Heart right ventricle (tissue), 16 donors: ENCODE measurements at regions of chr10 and their contacts with region 1.

Region 1: GRCh38 chr10:102394079-102394800 is 1.3 kb upstream of the NFKB2 start:
- DNase-seq: peak; percentile 95 to 97
- ATAC-seq: peak; percentile 91 to 94 (median 92)
- H3K4me3 ChIP-seq: peak overlapping the region; percentile 48 to 90 (median 69)
- H3K27ac ChIP-seq: peak overlapping the region; percentile 91 to 98 (median 96)
- H3K4me1 ChIP-seq: peaks cover 4 to 48% (median 25%) of the 10 kb centered on the region in 9 donors
- H3K27me3 ChIP-seq: no peaks in the 10 kb centered on the region
- CTCF ChIP-seq: peak in 6 of 9 donors; percentile 46 to 99 (median 98)

Region 2: DNA sequence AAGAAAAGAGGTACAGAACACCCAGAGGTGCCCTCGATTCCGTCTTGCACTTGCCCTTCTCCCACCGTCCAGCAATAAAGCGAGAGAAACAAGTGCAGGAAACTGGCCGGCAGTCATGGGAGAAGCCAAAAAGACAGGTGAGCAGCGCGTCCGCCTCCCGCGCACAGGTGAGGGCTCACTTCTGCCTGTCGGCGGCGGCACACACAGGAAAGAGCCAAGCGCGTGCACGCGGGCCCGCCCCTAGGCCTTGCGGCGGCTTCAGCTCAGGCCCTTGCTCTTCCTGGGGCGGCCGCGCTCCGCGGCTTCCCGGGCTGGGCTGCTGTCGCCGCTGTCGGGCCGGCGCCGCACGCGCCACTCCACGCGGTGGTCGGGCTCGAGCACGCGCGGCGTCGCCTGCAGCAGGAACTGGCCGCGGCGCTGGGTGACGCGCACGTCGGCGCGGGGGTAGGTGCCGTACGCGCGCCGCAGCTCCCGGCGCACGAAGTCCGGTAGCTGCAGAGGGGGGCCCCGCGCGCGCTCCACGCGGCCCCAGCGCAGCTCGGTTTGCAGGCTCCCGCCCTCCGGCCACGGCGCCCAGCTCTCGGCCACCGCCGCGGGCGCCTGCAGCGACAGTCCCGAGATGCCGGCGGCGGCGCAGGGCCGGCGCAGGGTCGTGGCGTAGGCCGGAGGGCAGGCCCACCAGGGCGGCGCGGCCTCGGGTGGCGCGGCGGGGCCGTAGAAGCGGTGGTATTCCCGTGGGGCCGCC is 56.1 kb after region 1 on chr10:
- intact Hi-C with region 1: loop called in 1 of 10 experiments (anchors 10 kb)
- DNase-seq: peak; percentile 78 to 87
- ATAC-seq: peak; percentile 86 to 96 (median 92)
- H3K4me3 ChIP-seq: peak overlapping the region; percentile 74 to 88 (median 82)
- H3K27ac ChIP-seq: peak overlapping the region in 9 of 10 donors; percentile 73 to 90 (median 85)
- H3K4me1 ChIP-seq: peaks cover 2 to 55% (median 17%) of the 10 kb centered on the region in 9 donors
- H3K27me3 ChIP-seq: no peaks in the 10 kb centered on the region
- CTCF ChIP-seq: peak in 2 of 9 donors; percentile 12 to 20

Region 3: GRCh38 chr10:102476466-102477141 is 82.4 kb after region 1 on chr10:
- intact Hi-C with region 1: loop called in 6 of 10 experiments (anchors 2 to 10 kb)
- DNase-seq: no peak
- ATAC-seq: no peak
- H3K4me3 ChIP-seq: no peak overlapping the region
- H3K27ac ChIP-seq: no peak overlapping the region
- H3K4me1 ChIP-seq: peaks cover 4 to 16% (median 11%) of the 10 kb centered on the region in 9 donors
- H3K27me3 ChIP-seq: no peaks in the 10 kb centered on the region
- CTCF ChIP-seq: no peak